ENCODE measurements at regions of chr18 and their contacts with region 1.

Region 1: DNA sequence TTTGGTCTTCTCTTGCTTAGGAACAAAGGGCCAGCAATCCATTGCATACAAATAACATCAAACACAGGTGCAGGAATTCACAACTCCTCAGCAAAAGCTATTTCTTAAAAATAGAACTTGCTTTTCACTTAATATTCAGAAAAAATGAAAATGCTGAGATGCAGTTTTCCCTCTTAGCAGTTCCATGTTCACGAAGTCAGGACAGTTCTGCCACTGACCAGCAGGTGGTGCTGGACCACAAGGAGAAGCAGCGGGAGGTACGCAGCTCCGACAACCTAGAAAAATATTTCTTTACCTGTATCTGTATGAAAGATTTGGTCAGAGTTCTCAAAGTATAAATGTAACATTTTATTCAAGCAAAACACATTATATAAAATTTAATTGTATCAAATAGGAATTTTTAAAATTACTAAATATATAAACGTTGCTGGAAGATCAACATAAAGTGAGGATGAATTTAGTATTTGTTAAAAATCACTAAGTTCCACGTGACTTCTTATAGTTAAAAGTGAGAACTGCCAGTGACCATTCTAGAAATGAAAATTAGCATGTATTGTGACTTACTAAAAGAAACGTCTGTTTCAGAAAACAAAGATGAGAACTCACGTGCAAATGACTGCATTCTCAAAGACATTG is 48.8 kb downstream of the ADNP2 start:
- DNase-seq: peak; percentile 69 to 73
- ATAC-seq: peak in 6 of 8 donors; percentile 54 to 70 (median 65)
- H3K4me3 ChIP-seq: no peak overlapping the region
- H3K27ac ChIP-seq: no peak overlapping the region
- H3K4me1 ChIP-seq: peaks cover 0 to 14% (median 0%) of the 10 kb centered on the region in 9 donors
- H3K27me3 ChIP-seq: peaks cover 0 to 12% (median 0%) of the 10 kb centered on the region in 7 donors
- CTCF ChIP-seq: peak; percentile 94 to 99 (median 98)

Region 2: GRCh38 chr18:79378542-79379250 is 779.1 kb before region 1 on chr18:
- intact Hi-C with region 1: loop called in 1 of 10 experiments (anchors 10 kb)
- DNase-seq: peak; percentile 79 to 83
- ATAC-seq: peak; percentile 64 to 90 (median 82)
- H3K4me3 ChIP-seq: no peak overlapping the region
- H3K27ac ChIP-seq: no peak overlapping the region
- H3K4me1 ChIP-seq: peaks cover 0 to 9% (median 4%) of the 10 kb centered on the region in 9 donors
- H3K27me3 ChIP-seq: no peaks in the 10 kb centered on the region
- CTCF ChIP-seq: peak in 8 of 9 donors; percentile 94 to 99 (median 97)

Measured in heart right ventricle (tissue), 16 donors.